ENCODE measurements at regions of chr2 and their contacts with region 1.

Region 1: DNA sequence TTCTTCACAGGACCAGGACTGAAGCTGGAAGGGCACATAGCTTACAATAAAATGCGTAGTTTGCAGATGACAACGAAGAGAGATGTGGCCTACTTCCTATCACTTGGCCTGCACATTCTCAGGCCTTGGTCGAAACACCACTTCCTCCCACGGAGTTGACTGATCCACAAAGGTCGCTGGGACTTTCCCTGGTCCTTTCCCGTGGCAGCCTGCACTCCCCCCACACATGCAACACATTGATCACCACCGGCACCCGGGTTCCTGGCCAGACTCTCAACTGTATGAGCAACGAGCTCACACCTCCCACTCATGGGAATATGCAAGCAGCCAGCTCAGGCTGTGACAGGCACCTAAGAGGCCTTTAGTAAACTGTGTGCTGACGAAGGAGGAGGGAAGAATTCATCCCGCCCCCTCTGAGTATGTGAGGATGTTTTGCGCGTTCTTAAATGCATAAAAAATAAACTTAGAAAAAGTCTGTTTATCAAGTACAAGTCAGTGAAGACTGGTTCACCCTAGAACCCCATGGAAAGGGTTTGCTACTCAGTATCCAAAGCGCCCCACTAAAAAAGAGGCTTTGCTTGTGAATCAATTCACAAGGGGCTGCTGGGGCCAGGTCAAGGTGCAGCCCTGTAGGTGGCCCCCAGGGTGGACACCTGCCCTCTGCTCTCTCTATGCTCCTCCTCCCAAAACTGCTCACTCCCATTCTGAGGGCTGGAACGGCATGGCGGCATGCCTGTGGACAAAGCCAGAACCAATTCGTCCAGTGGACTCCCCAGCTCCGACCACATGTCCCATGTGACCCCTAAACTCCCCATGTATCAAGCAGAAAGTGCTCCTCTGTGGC is 154.3 kb downstream of the EIPR1 start:
- DNase-seq: peak; percentile 58
- H3K4me3 Mint-ChIP-seq: peak overlapping the region; percentile 24
- H3K27ac Mint-ChIP-seq: peak overlapping the region; percentile 99
- H3K4me1 Mint-ChIP-seq: peaks cover 45% of the 10 kb centered on the region
- H3K27me3 Mint-ChIP-seq: no peaks in the 10 kb centered on the region

Region 2: GRCh38 chr2:2926009-2926857 is 297.1 kb before region 1 on chr2:
- intact Hi-C with region 1: loop called (anchors 2 kb)
- DNase-seq: no peak
- H3K4me3 Mint-ChIP-seq: no peak overlapping the region
- H3K27ac Mint-ChIP-seq: peak overlapping the region; percentile 64
- H3K4me1 Mint-ChIP-seq: peaks cover 9% of the 10 kb centered on the region
- H3K27me3 Mint-ChIP-seq: no peaks in the 10 kb centered on the region

Region 3: DNA sequence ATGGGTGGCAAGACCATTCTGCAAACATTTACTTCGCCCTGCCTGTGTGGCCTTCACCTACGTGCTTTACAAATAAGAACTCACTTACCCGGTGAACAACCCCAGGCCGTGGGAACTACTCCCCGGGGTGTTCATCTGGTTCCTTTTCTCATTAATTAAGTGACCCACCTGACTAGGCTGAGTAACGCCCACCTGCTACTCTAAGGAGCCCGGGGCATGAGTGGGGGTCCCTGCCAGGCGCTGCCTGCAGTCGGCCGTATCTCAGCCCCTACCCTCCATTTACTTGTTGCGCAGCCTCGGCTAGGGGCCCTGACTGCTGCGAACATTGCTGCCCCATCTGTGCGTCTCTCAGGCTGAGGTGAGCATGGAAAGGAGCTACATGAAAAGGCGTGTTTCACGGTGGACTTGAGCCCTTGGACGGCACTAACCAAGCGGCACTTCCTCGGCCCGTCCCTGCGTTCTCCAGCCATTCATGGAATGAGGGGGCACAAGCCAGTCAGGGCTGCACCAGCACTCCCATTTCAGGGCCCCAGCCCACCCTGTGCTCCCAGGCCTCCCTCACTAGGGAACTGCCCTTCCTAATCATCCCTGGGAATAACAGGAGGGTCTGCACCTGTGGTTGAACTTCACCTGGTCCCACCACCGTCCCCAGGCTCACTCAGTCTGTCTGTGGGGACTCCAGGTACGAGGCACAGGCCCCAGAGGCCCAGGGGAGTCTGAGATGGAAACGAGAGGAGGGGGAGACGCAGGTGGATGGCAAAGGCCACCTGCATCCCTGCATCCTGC is 54.4 kb after region 1 on chr2:
- intact Hi-C with region 1: loop called (anchors 2 kb)
- DNase-seq: no peak
- H3K4me3 Mint-ChIP-seq: no peak overlapping the region
- H3K27ac Mint-ChIP-seq: no peak overlapping the region
- H3K4me1 Mint-ChIP-seq: peaks cover 9% of the 10 kb centered on the region
- H3K27me3 Mint-ChIP-seq: no peaks in the 10 kb centered on the region

Region 4: DNA sequence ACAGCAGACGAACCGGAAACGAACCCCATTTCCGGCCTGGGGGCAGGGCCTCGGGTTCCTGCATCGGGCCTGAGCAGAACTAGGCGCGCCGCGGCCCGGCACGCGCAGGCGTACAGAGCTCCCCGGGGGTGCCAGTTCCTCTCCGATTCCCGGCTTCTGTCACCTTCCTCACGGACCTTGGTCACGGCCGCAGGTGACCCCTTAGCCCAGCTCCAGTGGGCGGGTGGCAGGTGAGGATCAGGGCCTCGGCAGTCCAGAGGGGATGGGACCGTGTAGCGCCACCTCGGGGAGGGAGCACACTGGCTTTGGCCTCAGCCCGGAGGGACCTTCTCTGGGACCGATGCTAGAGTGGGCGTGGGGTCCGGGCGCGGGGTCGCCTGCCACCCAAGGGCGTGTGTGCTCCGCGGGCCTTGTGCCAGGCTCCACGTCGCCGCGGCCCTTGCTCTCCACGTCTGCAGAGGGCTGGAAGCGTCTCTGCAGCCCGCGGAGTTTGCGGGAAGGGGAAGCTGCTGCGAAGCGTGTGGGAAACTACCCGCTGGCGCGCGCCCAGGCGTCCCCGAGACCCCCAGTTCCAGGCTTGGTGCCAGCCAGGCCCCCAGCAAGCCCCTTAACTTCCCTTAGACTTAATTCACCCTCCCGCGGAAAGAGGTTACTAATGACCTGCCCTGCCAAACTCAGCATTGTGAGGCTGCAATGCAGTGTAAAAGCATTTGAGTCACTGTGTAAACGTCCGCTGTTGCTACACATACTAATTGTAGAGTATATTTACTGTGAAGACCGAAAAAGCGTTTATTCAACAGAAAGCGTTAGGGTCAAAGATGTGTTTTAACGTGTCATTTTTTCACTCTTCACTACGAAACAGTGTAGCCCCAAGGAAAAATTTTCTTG is 156.6 kb after region 1 on chr2 and contains the start of gene TRAPPC12:
- intact Hi-C with region 1: loop called (anchors 1 kb)
- DNase-seq: peak; percentile 91
- H3K4me3 Mint-ChIP-seq: peak within 1 kb of the TSS; percentile 97
- H3K27ac Mint-ChIP-seq: peak within 1 kb of the TSS; percentile 97
- H3K4me1 Mint-ChIP-seq: peaks cover 33% of the 10 kb centered on the region
- H3K27me3 Mint-ChIP-seq: no peaks in the 10 kb centered on the region
- total RNA-seq, gene TRAPPC12: 84.6 and 87.1 TPM in 2 replicates

Region 5: GRCh38 chr2:3575534-3576262 is 352.4 kb after region 1 on chr2:
- intact Hi-C with region 1: loop called (anchors 5 kb)
- DNase-seq: peak; percentile 27
- H3K4me3 Mint-ChIP-seq: peak overlapping the region; percentile 93
- H3K27ac Mint-ChIP-seq: peak overlapping the region; percentile 90
- H3K4me1 Mint-ChIP-seq: peaks cover 34% of the 10 kb centered on the region
- H3K27me3 Mint-ChIP-seq: no peaks in the 10 kb centered on the region